ENCODE measurements at regions of chr7 and their contacts with region 1.

Region 1: GRCh38 chr7:127585044-127585953 is at the start of gene GCC1:
- DNase-seq: peak; percentile 95
- ATAC-seq: peak; percentile 64
- H3K4me3 Mint-ChIP-seq: peak within 1 kb of the TSS; percentile 90
- H3K27ac Mint-ChIP-seq: peak within 1 kb of the TSS; percentile 23
- H3K4me1 Mint-ChIP-seq: peaks cover 33% of the 10 kb centered on the region
- H3K27me3 Mint-ChIP-seq: peaks cover 24% of the 10 kb centered on the region
- CTCF ChIP-seq: no peak
- total RNA-seq, gene GCC1: 13.2 to 13.7 TPM (median 13.6 TPM) in 3 replicates

Region 2: GRCh38 chr7:127550247-127550646 is 35.1 kb before region 1 on chr7:
- CTCF ChIA-PET with region 1: no interaction called
- POLR2A ChIA-PET with region 1: no interaction called
- DNase-seq: no peak
- ATAC-seq: no peak
- H3K4me3 Mint-ChIP-seq: no peak overlapping the region
- H3K27ac Mint-ChIP-seq: no peak overlapping the region
- H3K4me1 Mint-ChIP-seq: no peaks in the 10 kb centered on the region
- H3K27me3 Mint-ChIP-seq: peaks cover 70% of the 10 kb centered on the region
- CTCF ChIP-seq: no peak

Region 3: DNA sequence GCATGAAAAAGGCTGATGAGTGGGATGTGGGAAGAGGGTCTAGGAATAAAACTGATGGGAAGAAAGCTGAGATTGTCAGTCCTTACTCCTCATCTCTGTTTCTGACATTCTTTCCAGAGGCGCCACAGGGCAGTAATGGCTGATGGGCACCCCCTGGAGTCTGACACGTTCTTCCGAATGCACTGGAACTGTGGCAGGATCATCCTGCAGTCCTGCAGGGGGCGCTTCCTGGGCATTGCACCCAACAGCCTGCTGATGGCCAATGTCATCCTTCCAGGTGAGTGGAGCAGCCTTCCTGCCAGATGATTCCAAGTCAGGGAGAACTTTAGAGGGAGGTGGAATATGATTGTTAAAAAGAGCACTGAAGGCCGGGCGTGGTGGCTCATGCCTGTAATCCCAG is 13.0 kb after region 1 on chr7:
- CTCF ChIA-PET with region 1: interaction called, 10 read pairs
- POLR2A ChIA-PET with region 1: no interaction called
- DNase-seq: peak; percentile 80
- ATAC-seq: peak; percentile 91
- H3K4me3 Mint-ChIP-seq: no peak overlapping the region
- H3K27ac Mint-ChIP-seq: no peak overlapping the region
- H3K4me1 Mint-ChIP-seq: peaks cover 19% of the 10 kb centered on the region
- H3K27me3 Mint-ChIP-seq: peaks cover 8% of the 10 kb centered on the region; the same call in 1 of the 2 replicates
- CTCF ChIP-seq: peak; percentile 77

Region 4: GRCh38 chr7:127619681-127620405 is 34.5 kb after region 1 on chr7:
- CTCF ChIA-PET with region 1: interaction called, 23 read pairs
- POLR2A ChIA-PET with region 1: interaction called, 9 read pairs
- DNase-seq: peak; percentile 66
- ATAC-seq: peak; percentile 86
- H3K4me3 Mint-ChIP-seq: peak overlapping the region; percentile 89
- H3K27ac Mint-ChIP-seq: no peak overlapping the region
- H3K4me1 Mint-ChIP-seq: peaks cover 17% of the 10 kb centered on the region
- H3K27me3 Mint-ChIP-seq: peaks cover 87% of the 10 kb centered on the region
- CTCF ChIP-seq: no peak